ENCODE measurements at regions of chr2 and their contacts with region 1.

Region 1: DNA sequence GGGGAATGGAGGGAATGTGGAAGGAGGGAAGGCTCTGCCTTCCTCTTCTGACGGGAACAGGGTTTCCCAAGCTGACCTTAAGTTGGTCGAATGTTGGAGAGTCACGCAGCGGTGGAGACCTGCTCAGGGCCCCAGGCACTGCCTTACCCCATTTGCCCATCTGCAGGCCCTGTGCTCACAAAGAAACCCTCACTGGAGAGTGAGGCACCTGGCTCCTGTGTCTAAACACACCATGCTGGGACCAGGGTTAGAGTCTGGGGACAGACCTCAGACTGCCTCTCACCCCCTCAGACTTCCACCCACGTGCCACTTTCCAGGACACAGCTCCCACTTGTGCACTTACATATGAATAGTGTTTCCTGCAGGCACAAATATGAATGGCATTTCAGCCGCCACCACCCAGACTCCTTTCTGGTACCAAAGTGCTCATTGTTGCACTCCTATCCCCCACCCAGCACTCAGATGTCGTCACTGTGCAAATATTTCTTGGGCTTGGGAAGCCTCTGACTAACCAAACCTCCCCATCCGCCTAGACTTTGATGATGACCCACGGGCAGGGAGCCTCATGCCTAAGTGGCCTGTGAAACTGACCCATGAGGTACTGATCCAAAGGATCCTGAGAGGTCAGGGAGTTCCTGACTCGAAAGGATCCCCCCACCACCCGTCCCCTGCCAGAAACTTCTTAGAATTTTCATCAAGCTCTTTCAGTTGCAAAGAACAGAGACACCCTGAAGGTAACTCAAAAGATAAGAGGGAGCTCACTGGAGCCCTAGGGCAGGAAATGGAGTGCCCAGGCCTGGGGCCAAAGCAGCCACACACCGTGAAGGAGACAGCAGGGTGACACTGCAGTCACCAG is 78.3 kb downstream of the STPG4 start:
- DNase-seq: peak; percentile 91
- H3K4me3 Mint-ChIP-seq: peak overlapping the region; percentile 42
- H3K27ac Mint-ChIP-seq: peak overlapping the region; percentile 94
- H3K4me1 Mint-ChIP-seq: peaks cover 88% of the 10 kb centered on the region
- H3K27me3 Mint-ChIP-seq: no peaks in the 10 kb centered on the region
- CTCF ChIP-seq: no peak

Region 2: DNA sequence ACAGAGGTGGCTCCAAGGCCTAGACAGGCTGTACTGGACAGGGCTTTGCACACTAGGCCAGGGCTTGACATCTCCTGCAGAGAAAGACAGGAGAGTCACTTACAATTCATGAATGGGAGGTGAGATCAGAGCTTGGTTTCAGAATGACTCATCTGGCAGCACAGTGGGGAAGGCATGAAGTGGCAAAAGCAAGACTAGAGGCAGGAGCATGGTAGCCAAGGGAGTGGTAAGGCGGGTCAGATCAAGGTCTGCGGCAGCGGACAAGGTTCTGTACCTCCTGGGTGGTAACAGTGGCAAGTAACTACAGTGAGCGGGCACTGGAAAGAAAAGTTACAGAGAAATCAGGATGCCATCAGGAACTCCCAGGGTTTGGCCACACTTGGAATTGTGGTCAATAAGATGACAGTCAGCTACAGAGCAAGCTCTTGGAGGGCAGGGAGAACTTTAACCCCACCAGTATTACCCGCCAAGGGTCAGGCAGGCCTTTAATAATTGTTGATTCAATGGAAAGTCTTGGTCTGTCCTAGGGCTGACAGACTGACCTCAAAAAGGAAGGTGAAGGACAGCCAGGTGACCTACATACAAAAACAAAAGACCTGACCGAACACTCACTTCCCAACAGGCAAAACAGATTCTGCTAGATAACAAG is 166.9 kb before region 1 on chr2:
- CTCF ChIA-PET with region 1: no interaction called
- intact Hi-C with region 1: no loop called
- DNase-seq: peak; percentile 64
- H3K4me3 Mint-ChIP-seq: peak overlapping the region; percentile 24
- H3K27ac Mint-ChIP-seq: peak overlapping the region; percentile 61
- H3K4me1 Mint-ChIP-seq: peaks cover 44% of the 10 kb centered on the region
- H3K27me3 Mint-ChIP-seq: no peaks in the 10 kb centered on the region
- CTCF ChIP-seq: no peak

Region 3: GRCh38 chr2:47016172-47016913 is 60.5 kb before region 1 on chr2:
- CTCF ChIA-PET with region 1: no interaction called
- intact Hi-C with region 1: loop called (anchors 1 kb)
- DNase-seq: peak; percentile 81
- H3K4me3 Mint-ChIP-seq: peak overlapping the region; percentile 11
- H3K27ac Mint-ChIP-seq: peak overlapping the region; percentile 51
- H3K4me1 Mint-ChIP-seq: peaks cover 27% of the 10 kb centered on the region
- H3K27me3 Mint-ChIP-seq: no peaks in the 10 kb centered on the region
- CTCF ChIP-seq: no peak

Region 4: GRCh38 chr2:47043142-47043890 is 33.5 kb before region 1 on chr2:
- CTCF ChIA-PET with region 1: interaction called, 3 read pairs
- intact Hi-C with region 1: loop called (anchors 2 kb)
- DNase-seq: peak; percentile 84
- H3K4me3 Mint-ChIP-seq: peak overlapping the region; percentile 60
- H3K27ac Mint-ChIP-seq: peak overlapping the region; percentile 95
- H3K4me1 Mint-ChIP-seq: peaks cover 48% of the 10 kb centered on the region
- H3K27me3 Mint-ChIP-seq: no peaks in the 10 kb centered on the region
- CTCF ChIP-seq: no peak

Region 5: GRCh38 chr2:47174733-47175361 is 98.0 kb after region 1 on chr2:
- CTCF ChIA-PET with region 1: no interaction called
- intact Hi-C with region 1: loop called (anchors 5 kb)
- DNase-seq: peak; percentile 76
- H3K4me3 Mint-ChIP-seq: peak overlapping the region; percentile 100
- H3K27ac Mint-ChIP-seq: peak overlapping the region; percentile 99
- H3K4me1 Mint-ChIP-seq: peaks cover 36% of the 10 kb centered on the region
- H3K27me3 Mint-ChIP-seq: no peaks in the 10 kb centered on the region
- CTCF ChIP-seq: no peak

Region 6: DNA sequence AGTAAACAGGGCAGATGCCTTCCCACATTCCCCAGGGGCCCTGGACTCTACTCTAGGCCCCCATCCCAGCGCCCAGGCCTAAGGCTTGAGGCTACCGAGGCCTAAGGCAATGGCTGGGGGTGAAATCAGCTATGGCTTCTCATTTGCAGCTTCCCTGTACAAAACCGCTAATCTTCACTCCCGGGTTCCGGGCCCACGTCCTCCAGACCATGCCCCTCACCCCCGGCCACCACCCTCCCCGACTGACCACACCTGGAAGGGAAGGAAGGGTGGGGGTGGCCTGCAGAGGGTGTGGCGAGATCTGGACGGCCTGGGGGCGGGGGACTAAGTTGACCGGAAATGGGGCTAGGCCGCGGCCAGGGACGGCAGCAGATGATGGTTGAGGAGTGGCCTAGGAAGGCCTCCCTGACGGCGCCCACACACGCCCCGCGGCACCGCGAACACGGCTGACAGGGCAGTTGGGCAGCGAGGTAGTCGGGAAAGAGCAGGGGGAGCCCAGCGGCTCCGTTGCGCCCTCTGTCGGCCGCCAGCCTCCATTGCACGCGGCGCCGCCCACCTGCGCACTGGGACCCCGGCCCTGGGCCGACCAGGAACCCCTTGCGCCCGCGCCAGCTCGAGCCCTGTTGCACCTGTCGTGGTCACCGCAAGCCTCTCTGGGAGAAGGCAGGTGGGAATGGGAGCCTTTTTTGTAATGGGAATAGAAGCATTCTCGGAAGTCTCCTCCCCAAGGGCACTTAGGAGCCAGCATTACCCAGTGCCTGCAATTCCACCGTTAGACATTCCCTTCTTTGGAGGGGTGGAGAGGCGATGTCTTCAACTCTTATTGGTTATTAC is 195.4 kb after region 1 on chr2:
- CTCF ChIA-PET with region 1: no interaction called
- intact Hi-C with region 1: loop called (anchors 5 kb)
- DNase-seq: peak; percentile 79
- H3K4me3 Mint-ChIP-seq: peak overlapping the region; percentile 87
- H3K27ac Mint-ChIP-seq: peak overlapping the region; percentile 92
- H3K4me1 Mint-ChIP-seq: peaks cover 45% of the 10 kb centered on the region
- H3K27me3 Mint-ChIP-seq: no peaks in the 10 kb centered on the region
- CTCF ChIP-seq: peak; percentile 97

Region 7: GRCh38 chr2:47313141-47313691 is 236.4 kb after region 1 on chr2:
- CTCF ChIA-PET with region 1: no interaction called
- intact Hi-C with region 1: loop called (anchors 2 kb)
- DNase-seq: peak; percentile 73
- H3K4me3 Mint-ChIP-seq: no peak overlapping the region
- H3K27ac Mint-ChIP-seq: peak overlapping the region; percentile 66
- H3K4me1 Mint-ChIP-seq: peaks cover 48% of the 10 kb centered on the region
- H3K27me3 Mint-ChIP-seq: no peaks in the 10 kb centered on the region
- CTCF ChIP-seq: no peak

Measured in Calu3 (cell line).